Activated naive CD4-positive, alpha-beta T cell treated with anti-CD3 and anti-CD28 coated beads for 36 hours (primary cell): ENCODE measurements at regions of chr12 and their contacts with region 1.

Region 1: GRCh38 chr12:50597200-50598195 is 92.7 kb downstream of the DIP2B start:
- DNase-seq: peak; percentile 85
- H3K4me3 Mint-ChIP-seq: peak overlapping the region; percentile 57
- H3K27ac Mint-ChIP-seq: peak overlapping the region; percentile 95
- H3K4me1 Mint-ChIP-seq: peaks cover 49% of the 10 kb centered on the region
- H3K27me3 Mint-ChIP-seq: no peaks in the 10 kb centered on the region

Region 2: DNA sequence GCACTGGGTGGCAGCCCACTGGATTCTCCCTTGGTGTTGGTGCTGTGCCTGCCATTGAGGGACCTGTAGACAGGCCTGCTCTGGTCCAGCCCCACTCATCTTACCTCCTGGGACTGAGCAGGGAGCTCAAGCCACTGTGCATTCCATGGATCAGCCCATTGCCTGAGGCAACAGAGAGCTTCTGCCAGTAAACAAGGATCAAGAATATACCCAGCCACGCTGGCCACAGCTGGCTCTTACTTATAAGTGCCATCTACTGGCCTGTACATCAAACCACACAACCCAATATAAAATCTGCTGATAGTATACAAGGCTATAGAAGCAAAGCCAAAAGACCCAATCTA is 987.8 kb before region 1 on chr12:
- CTCF ChIA-PET with region 1: no interaction called
- intact Hi-C with region 1: no loop called
- DNase-seq: no peak
- H3K4me3 Mint-ChIP-seq: no peak overlapping the region
- H3K27ac Mint-ChIP-seq: no peak overlapping the region
- H3K4me1 Mint-ChIP-seq: no peaks in the 10 kb centered on the region
- H3K27me3 Mint-ChIP-seq: peaks cover 4% of the 10 kb centered on the region

Region 3: DNA sequence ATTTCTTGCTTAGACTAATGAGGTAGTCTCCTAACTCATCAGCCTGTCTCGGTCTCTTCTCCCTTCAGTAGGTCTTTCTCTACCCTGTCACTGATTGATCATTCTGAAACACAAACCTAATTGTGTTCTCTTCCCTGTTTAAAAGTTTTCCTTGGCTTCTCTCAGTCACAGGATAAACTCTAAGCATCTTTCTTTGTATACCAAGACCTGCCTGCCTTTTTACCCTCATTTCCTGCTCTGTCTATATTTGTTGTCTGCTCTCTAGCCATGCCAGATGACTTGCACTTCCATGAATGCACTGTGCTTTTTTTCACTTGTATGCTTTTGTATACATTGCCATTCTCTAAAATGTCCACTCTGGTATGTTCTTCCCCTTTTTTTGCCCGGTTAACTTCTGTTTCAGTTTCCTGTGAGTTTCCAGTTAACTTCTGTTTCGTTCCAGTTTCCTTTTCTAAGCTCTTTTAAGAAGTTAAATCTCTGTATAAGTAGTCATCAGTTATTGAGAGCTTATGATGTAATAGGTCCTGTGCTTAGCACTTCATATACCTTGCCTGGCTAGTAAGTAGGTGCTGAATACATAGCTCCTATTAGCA is 79.9 kb before region 1 on chr12:
- CTCF ChIA-PET with region 1: interaction called, 4 read pairs
- intact Hi-C with region 1: loop called (anchors 1 kb)
- DNase-seq: peak; percentile 23
- H3K4me3 Mint-ChIP-seq: no peak overlapping the region
- H3K27ac Mint-ChIP-seq: no peak overlapping the region
- H3K4me1 Mint-ChIP-seq: peaks cover 69% of the 10 kb centered on the region
- H3K27me3 Mint-ChIP-seq: no peaks in the 10 kb centered on the region

Region 4: GRCh38 chr12:50542448-50542847 is 55.0 kb before region 1 on chr12:
- CTCF ChIA-PET with region 1: interaction called, 3 read pairs
- intact Hi-C with region 1: loop called (anchors 1 kb)
- DNase-seq: peak; percentile 64
- H3K4me3 Mint-ChIP-seq: no peak overlapping the region
- H3K27ac Mint-ChIP-seq: peak overlapping the region; percentile 85
- H3K4me1 Mint-ChIP-seq: peaks cover 55% of the 10 kb centered on the region
- H3K27me3 Mint-ChIP-seq: no peaks in the 10 kb centered on the region

Region 5: DNA sequence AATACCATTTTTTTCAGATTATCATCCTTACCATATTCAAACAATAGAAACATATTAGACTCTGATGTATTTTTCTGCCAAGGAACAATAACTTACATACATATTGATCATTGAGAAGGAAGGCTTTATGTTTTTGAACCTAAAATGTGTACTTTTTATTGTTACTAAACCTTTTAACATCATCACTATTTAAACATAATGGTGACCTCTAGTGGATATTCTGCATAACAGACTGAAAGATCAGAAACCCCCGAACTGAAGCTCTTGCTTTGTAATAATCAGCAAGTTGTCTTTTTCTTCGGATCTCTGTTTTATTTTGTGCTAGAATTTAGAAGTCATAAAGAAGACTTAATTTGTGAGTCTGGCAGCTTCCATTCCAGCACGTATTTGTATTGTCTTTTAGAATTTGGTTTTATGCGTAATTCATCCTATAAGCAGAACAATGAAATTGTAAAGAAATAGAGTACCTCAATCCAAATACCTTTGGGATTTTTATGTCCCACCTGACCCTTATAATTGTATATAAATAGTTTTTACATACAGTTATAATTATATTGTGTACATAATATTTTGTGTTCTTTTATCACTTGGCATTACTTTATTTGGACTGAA is 40.5 kb after region 1 on chr12:
- CTCF ChIA-PET with region 1: interaction called, 4 read pairs
- intact Hi-C with region 1: loop called (anchors 1 kb)
- DNase-seq: no peak
- H3K4me3 Mint-ChIP-seq: no peak overlapping the region
- H3K27ac Mint-ChIP-seq: peak overlapping the region; percentile 47
- H3K4me1 Mint-ChIP-seq: peaks cover 62% of the 10 kb centered on the region
- H3K27me3 Mint-ChIP-seq: no peaks in the 10 kb centered on the region

Region 6: GRCh38 chr12:50960130-50960529 is 362.6 kb after region 1 on chr12:
- CTCF ChIA-PET with region 1: no interaction called
- intact Hi-C with region 1: no loop called
- DNase-seq: no peak
- H3K4me3 Mint-ChIP-seq: no peak overlapping the region
- H3K27ac Mint-ChIP-seq: no peak overlapping the region
- H3K4me1 Mint-ChIP-seq: peaks cover 8% of the 10 kb centered on the region
- H3K27me3 Mint-ChIP-seq: no peaks in the 10 kb centered on the region